ENCODE measurements at regions of chr3 and their contacts with region 1.

Region 1: GRCh38 chr3:48088749-48089466 is 72.7 kb upstream of the MAP4 start:
- DNase-seq: peak; percentile 97
- ATAC-seq: peak; percentile 96
- H3K4me3 Mint-ChIP-seq: peak overlapping the region; percentile 97
- H3K27ac Mint-ChIP-seq: peak overlapping the region; percentile 93
- H3K4me1 Mint-ChIP-seq: peaks cover 29% of the 10 kb centered on the region
- H3K27me3 Mint-ChIP-seq: no peaks in the 10 kb centered on the region

Region 2: DNA sequence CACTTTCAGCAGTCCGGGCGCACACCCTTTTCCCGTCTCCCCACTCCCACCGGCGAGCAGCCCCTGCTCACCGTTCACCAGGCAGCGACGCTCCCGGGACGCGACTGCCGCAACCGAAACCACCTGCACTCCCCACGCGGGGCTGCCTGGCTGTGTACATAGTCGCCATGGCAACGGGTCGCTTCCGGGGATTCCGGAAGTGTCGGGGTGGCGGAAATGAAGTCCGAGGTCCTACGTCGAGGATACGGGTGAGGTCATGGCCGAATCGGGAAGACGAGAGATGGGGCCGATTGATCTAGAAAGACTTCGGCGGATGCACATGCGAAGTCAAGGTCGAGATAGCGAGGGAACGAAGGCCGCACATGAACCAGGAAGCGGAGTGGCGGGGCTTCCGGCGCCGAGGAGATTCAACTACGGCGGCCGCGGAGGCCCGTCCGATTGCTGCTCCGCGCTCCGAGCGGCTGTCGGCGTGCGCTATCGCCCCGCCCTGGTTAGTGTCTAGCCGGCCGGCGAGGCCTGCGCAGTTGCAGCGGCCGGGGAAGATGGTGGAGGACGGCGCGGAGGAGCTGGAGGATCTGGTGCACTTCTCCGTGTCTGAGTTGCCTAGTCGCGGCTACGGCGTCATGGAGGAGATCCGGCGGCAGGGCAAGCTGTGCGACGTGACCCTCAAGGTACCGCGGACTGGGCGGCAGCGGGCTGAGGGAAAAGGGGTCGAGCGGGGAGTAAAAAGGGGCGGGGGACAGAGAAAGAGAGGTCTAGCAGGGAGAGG is 806.3 kb before region 1 on chr3 and contains the starts of genes KIF9 and KLHL18:
- CTCF ChIA-PET with region 1: no interaction called
- POLR2A ChIA-PET with region 1: no interaction called
- intact Hi-C with region 1: loop called in 1 of 2 experiments (anchors 2 kb)
- DNase-seq: peak; percentile 97
- ATAC-seq: peak; percentile 91
- H3K4me3 Mint-ChIP-seq: peak within 1 kb of the TSS; percentile 95
- H3K27ac Mint-ChIP-seq: peak within 1 kb of the TSS; percentile 99
- H3K4me1 Mint-ChIP-seq: peaks cover 31% of the 10 kb centered on the region
- H3K27me3 Mint-ChIP-seq: no peaks in the 10 kb centered on the region
- total RNA-seq, gene KIF9: 2.7 to 5.3 TPM
- total RNA-seq, gene KLHL18: 19.0 to 22.4 TPM

Region 3: DNA sequence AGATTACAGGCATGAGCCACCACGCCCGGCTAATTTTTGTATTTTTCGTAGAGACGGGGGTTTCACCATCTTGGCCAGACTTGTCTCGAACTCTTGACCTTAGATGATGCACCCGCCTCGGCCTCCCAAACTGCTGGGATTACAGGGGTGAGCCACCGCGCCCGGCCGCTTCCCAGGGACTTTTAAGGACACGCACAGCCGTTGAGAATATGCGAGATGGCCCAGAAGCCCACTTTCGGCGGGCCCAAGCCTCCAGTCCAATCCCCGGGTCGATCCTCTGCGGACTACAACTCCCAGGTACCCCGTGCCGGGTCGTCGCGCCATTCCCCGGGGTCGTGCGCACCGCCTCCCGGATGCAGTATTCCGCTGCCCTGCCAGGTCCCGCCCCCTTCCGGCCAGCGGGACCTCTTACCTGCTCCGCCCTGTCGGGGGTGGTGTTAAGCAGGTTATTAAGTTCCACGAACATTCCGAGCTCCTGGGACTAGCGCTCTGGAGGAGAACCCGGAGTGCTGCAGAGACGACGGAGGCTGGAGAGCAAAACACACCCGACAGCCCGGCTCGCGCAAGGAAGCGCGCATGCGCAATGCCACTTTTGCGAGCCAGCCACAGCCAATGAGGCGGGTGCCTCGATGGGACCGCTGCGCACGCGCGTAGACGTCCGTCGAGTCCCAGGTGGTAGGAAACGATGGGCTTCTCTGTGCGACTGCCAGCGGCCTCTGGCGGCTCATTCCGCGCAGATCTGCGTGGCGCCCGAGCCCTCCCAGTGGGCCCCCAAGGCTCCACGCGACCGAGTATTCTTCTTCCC is 575.6 kb before region 1 on chr3 and contains the start of gene ELP6:
- CTCF ChIA-PET with region 1: no interaction called
- POLR2A ChIA-PET with region 1: no interaction called
- intact Hi-C with region 1: loop called in 1 of 2 experiments (anchors 1 kb)
- DNase-seq: peak; percentile 99
- ATAC-seq: peak; percentile 97
- H3K4me3 Mint-ChIP-seq: peak within 1 kb of the TSS; percentile 91
- H3K27ac Mint-ChIP-seq: peak within 1 kb of the TSS; percentile 96
- H3K4me1 Mint-ChIP-seq: peaks cover 20% of the 10 kb centered on the region
- H3K27me3 Mint-ChIP-seq: no peaks in the 10 kb centered on the region
- total RNA-seq, gene ELP6: 27.8 to 40.3 TPM

Region 4: DNA sequence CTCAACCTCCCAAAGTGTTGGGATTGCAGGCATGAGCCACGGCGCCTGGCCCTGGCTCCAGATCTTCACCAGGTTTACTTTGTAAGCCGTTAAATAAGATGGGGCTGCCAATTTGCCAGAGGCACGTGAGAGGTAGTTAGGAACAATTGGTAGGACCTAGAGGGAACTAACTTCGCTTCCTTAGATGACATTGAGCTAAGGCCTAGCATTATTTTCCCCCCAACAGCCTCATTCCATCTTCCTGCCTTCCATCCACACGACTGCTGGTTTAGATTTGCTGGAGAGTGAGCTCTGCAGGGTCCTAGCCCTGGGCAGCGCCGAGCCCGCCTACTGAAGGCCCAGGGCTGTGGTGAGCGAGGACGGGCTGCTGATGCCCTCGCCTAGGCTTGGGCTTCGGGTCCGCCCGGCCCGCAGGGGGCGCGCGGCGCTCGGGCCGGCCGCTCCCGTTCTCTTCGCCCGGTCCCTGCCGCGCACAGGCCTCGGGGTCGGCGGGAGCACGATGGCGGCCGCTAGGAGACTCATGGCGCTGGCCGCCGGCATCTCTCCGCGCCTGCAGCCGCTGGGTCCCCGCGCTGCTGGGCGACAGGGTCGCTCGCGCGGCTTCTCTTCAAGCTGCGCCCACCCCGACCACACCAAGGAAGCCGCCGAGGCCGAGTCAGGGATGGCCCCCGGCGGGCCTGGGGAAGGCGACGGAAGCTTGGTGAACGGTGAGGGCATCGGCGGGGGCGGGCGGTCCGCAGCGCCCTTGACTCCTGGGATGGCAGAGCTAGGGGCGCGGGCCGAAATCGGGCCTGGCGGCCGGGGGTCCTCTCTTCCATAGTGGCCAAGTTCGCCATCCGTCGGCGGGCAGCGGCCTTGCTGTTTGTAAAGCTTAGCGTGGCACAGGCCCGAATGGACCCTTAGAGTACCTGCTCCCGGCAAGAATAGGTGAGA is 264.1 kb before region 1 on chr3:
- CTCF ChIA-PET with region 1: no interaction called
- POLR2A ChIA-PET with region 1: no interaction called
- intact Hi-C with region 1: loop called in 1 of 2 experiments (anchors 1 kb)
- DNase-seq: peak; percentile 88
- ATAC-seq: peak; percentile 98
- H3K4me3 Mint-ChIP-seq: peak overlapping the region; percentile 90
- H3K27ac Mint-ChIP-seq: peak overlapping the region; percentile 80
- H3K4me1 Mint-ChIP-seq: peaks cover 36% of the 10 kb centered on the region
- H3K27me3 Mint-ChIP-seq: no peaks in the 10 kb centered on the region

Region 5: DNA sequence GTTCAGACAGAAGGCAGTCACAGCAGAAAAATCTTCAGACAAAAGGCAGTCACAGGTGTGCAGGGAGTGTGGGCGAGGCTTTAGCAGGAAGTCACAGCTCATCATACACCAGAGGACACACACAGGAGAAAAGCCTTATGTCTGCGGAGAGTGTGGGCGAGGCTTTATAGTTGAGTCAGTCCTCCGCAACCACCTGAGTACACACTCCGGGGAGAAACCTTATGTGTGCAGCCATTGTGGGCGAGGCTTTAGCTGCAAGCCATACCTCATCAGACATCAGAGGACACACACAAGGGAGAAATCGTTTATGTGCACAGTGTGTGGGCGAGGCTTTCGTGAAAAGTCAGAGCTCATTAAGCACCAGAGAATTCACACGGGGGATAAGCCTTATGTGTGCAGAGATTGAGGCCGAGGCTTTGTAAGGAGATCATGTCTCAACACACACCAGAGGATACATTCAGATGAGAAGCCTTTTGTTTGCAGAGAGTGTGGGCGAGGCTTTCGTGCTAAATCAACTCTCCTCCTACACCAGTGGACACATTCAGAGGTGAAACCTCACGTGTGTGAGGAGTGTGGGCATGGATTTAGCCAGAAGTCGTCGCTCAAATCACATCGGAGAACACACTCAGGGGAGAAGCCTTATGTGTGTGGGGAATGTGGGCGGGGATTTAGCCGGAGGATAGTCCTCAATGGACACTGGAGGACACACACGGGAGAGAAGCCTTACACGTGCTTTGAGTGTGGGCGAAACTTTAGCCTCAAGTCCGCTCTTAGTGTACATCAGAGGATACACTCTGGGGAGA is 179.7 kb after region 1 on chr3:
- CTCF ChIA-PET with region 1: no interaction called
- POLR2A ChIA-PET with region 1: interaction called, 5 read pairs
- intact Hi-C with region 1: loop called in 1 of 2 experiments (anchors 1 kb)
- DNase-seq: peak; percentile 95
- ATAC-seq: peak; percentile 91
- H3K4me3 Mint-ChIP-seq: peak overlapping the region; percentile 57
- H3K27ac Mint-ChIP-seq: peak overlapping the region; percentile 92
- H3K4me1 Mint-ChIP-seq: peaks cover 39% of the 10 kb centered on the region
- H3K27me3 Mint-ChIP-seq: no peaks in the 10 kb centered on the region

Region 6: GRCh38 chr3:48716982-48717746 is 628.3 kb after region 1 on chr3 and contains the start of gene IP6K2:
- CTCF ChIA-PET with region 1: no interaction called
- POLR2A ChIA-PET with region 1: no interaction called
- intact Hi-C with region 1: loop called in 1 of 2 experiments (anchors 2 kb)
- DNase-seq: peak; percentile 99
- ATAC-seq: peak; percentile 100
- H3K4me3 Mint-ChIP-seq: peak within 1 kb of the TSS; percentile 97
- H3K27ac Mint-ChIP-seq: peak within 1 kb of the TSS; percentile 97
- H3K4me1 Mint-ChIP-seq: peaks cover 31% of the 10 kb centered on the region
- H3K27me3 Mint-ChIP-seq: no peaks in the 10 kb centered on the region
- total RNA-seq, gene IP6K2: 39.4 to 48.3 TPM

Region 7: GRCh38 chr3:49021813-49022687 is 933.1 kb after region 1 on chr3 and contains the start of gene NDUFAF3:
- CTCF ChIA-PET with region 1: no interaction called
- POLR2A ChIA-PET with region 1: no interaction called
- intact Hi-C with region 1: loop called in 1 of 2 experiments (anchors 5 kb)
- DNase-seq: peak; percentile 96
- ATAC-seq: peak; percentile 78
- H3K4me3 Mint-ChIP-seq: peak within 1 kb of the TSS; percentile 95
- H3K27ac Mint-ChIP-seq: peak within 1 kb of the TSS; percentile 96
- H3K4me1 Mint-ChIP-seq: peaks cover 60% of the 10 kb centered on the region
- H3K27me3 Mint-ChIP-seq: no peaks in the 10 kb centered on the region
- total RNA-seq, gene NDUFAF3: 90.8 to 108 TPM